ENCODE measurements at regions of chr9 and their contacts with region 1.

Region 1: GRCh38 chr9:6827439-6827838 is 69.7 kb downstream of the KDM4C start:
- DNase-seq: peak; percentile 28
- H3K4me3 Mint-ChIP-seq: no peak overlapping the region
- H3K27ac Mint-ChIP-seq: no peak overlapping the region
- H3K4me1 Mint-ChIP-seq: peaks cover 10% of the 10 kb centered on the region
- H3K27me3 Mint-ChIP-seq: no peaks in the 10 kb centered on the region

Region 2: DNA sequence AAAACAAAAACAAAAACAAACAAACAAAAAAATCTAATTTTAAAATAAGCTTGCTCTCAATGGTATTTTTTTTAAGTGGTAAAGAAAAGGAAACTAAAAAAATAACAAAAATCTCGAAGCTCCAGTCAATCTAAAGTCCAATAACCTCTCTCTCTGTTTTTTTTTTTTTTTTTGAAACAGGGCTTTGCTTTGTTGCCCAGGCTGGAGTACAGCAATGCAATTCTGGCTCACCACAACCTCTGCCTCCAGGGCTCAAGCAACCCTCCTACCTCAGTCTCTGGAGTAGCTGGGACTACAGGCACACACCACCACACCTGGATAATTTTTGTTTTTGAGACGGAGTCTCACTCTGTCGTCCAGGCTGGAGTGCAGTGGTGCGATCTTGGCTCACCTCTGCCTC is 156.0 kb before region 1 on chr9:
- CTCF ChIA-PET with region 1: no interaction called
- POLR2A ChIA-PET with region 1: no interaction called
- DNase-seq: no peak
- H3K4me3 Mint-ChIP-seq: no peak overlapping the region
- H3K27ac Mint-ChIP-seq: no peak overlapping the region
- H3K4me1 Mint-ChIP-seq: peaks cover 1% of the 10 kb centered on the region
- H3K27me3 Mint-ChIP-seq: no peaks in the 10 kb centered on the region

Region 3: GRCh38 chr9:6869081-6869948 is 41.9 kb after region 1 on chr9:
- CTCF ChIA-PET with region 1: no interaction called
- POLR2A ChIA-PET with region 1: no interaction called
- DNase-seq: no peak
- H3K4me3 Mint-ChIP-seq: no peak overlapping the region
- H3K27ac Mint-ChIP-seq: no peak overlapping the region
- H3K4me1 Mint-ChIP-seq: peaks cover 3% of the 10 kb centered on the region
- H3K27me3 Mint-ChIP-seq: no peaks in the 10 kb centered on the region

Region 4: GRCh38 chr9:7053903-7054302 is 226.5 kb after region 1 on chr9:
- CTCF ChIA-PET with region 1: interaction called, 28 read pairs
- POLR2A ChIA-PET with region 1: no interaction called
- DNase-seq: no peak
- H3K4me3 Mint-ChIP-seq: no peak overlapping the region
- H3K27ac Mint-ChIP-seq: no peak overlapping the region
- H3K4me1 Mint-ChIP-seq: peaks cover 19% of the 10 kb centered on the region
- H3K27me3 Mint-ChIP-seq: no peaks in the 10 kb centered on the region

Region 5: GRCh38 chr9:7186175-7186574 is 358.7 kb after region 1 on chr9:
- CTCF ChIA-PET with region 1: interaction called, 10 read pairs
- POLR2A ChIA-PET with region 1: no interaction called
- DNase-seq: peak; percentile 20
- H3K4me3 Mint-ChIP-seq: no peak overlapping the region
- H3K27ac Mint-ChIP-seq: no peak overlapping the region
- H3K4me1 Mint-ChIP-seq: no peaks in the 10 kb centered on the region
- H3K27me3 Mint-ChIP-seq: no peaks in the 10 kb centered on the region

Region 6: DNA sequence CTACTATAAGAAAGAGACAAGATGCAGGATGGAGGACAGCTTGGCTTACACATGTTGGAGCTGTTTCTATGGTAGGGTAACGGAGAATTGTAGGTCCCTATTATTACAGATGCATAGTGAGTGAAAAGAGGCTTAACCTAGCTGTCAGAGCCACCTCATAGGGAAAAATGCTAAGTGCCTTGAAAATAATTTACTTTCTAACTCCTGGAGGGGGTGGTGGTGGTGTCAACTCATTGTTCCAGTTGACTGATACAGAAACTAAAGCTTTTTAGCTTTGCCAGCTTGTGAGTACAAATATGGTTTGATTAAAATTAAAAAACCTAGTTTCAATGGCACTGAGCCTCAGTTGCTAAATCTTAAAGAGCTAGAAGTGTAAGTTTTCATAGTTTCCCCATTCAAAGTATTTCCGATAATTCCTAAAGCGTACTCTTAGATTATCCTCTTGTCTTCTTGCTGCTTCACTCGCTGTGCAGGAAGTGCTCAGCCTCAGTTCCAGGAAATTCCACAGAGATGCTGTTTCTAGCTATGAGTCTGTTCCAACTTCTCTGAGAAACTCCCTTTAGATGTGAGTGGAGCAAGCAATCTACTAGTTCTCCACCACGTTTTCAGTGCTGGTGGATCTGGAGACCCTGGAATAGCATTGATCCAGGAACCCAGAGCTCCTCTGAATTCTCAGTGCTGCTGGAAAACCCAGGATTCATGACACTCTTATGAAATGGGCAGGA is 706.9 kb after region 1 on chr9:
- CTCF ChIA-PET with region 1: interaction called, 12 read pairs
- POLR2A ChIA-PET with region 1: no interaction called
- DNase-seq: peak; percentile 39
- H3K4me3 Mint-ChIP-seq: peak overlapping the region; percentile 43
- H3K27ac Mint-ChIP-seq: peak overlapping the region; percentile 72
- H3K4me1 Mint-ChIP-seq: peaks cover 41% of the 10 kb centered on the region
- H3K27me3 Mint-ChIP-seq: peaks cover 13% of the 10 kb centered on the region

Measured in activated CD4-positive, alpha-beta memory T cell treated with anti-CD3 and anti-CD28 coated beads, Interleukin-2, amount 10 ng/mL, durations not matched to agents 7 days and 5 days (primary cell).